GM12878 (cell line): ENCODE measurements at regions of chr16 and their contacts with region 1.

Region 1: DNA sequence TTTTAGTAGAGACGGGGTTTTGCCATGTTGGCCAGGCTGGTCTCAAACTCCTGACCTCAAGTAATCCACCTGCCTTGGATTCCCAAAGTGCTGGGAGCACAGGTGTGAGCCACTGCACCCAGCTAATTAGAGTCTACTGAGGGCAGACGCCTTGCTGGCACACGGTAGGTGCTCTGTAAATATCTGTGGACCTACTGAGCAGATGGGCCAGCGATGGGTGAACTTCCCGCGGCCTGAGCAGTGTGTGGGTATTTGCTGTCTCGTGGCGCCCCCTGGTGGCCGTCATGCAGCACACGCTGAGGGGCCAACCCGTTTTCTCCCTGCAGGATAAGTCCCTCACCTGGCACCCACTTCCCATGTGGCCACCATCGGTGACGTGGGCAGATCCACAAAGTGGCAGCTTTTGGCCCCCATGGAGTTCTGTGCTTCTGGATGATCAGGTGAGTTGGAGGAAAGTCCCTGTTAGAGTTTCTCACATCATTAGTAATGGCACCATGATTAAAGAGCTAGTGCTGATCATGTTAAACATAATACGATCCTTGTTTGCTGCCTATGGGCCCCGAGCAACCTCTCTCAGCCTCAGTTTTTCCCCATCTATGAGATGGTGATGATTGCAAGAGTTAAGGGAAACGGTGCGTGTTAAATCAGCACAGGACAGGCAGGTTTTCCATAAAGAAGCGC is 40.7 kb downstream of the ZDHHC7 start:
- DNase-seq: peak; percentile 27
- ATAC-seq: peak; percentile 99
- H3K4me3 ChIP-seq: no peak overlapping the region
- H3K27ac ChIP-seq: no peak overlapping the region
- H3K4me1 ChIP-seq: no peaks in the 10 kb centered on the region
- H3K27me3 ChIP-seq: no peaks in the 10 kb centered on the region
- CTCF ChIP-seq: peak; percentile 89 to 92 (median 90)
- EP300 ChIP-seq: no peak
- POLR2A ChIP-seq: no peak
- RAD21 ChIP-seq: peak; percentile 82

Region 2: GRCh38 chr16:84746882-84747281 is 223.7 kb before region 1 on chr16:
- CTCF ChIA-PET with region 1: interaction called, 157 read pairs
- POLR2A ChIA-PET with region 1: no interaction called
- RAD21 ChIA-PET with region 1: interaction called, 84 read pairs
- SMC1A ChIA-PET with region 1: interaction called, 142 read pairs
- in situ Hi-C with region 1: loop called (anchors 5 kb)
- intact Hi-C with region 1: no loop called
- DNase-seq: no peak
- ATAC-seq: no peak
- H3K4me3 ChIP-seq: no peak overlapping the region
- H3K27ac ChIP-seq: no peak overlapping the region
- H3K4me1 ChIP-seq: peaks cover 22% of the 10 kb centered on the region
- H3K27me3 ChIP-seq: no peaks in the 10 kb centered on the region
- CTCF ChIP-seq: 0 out of 6 replicates have a peak, but pooled peaks of 2 of the 3 experiments have one; percentile 11 to 22
- EP300 ChIP-seq: no peak
- POLR2A ChIP-seq: no peak
- RAD21 ChIP-seq: no peak

Region 3: GRCh38 chr16:84925092-84925772 is 45.4 kb before region 1 on chr16:
- CTCF ChIA-PET with region 1: interaction called, 60 read pairs
- POLR2A ChIA-PET with region 1: no interaction called
- RAD21 ChIA-PET with region 1: interaction called, 11 read pairs
- SMC1A ChIA-PET with region 1: interaction called, 8 read pairs
- in situ Hi-C with region 1: no loop called
- intact Hi-C with region 1: loop called (anchors 1 kb)
- DNase-seq: no peak
- ATAC-seq: peak; percentile 90
- H3K4me3 ChIP-seq: no peak overlapping the region
- H3K27ac ChIP-seq: no peak overlapping the region
- H3K4me1 ChIP-seq: no peaks in the 10 kb centered on the region
- H3K27me3 ChIP-seq: no peaks in the 10 kb centered on the region
- CTCF ChIP-seq: peak; percentile 73 to 84 (median 73)
- EP300 ChIP-seq: no peak
- POLR2A ChIP-seq: no peak
- RAD21 ChIP-seq: peak; percentile 71

Region 4: DNA sequence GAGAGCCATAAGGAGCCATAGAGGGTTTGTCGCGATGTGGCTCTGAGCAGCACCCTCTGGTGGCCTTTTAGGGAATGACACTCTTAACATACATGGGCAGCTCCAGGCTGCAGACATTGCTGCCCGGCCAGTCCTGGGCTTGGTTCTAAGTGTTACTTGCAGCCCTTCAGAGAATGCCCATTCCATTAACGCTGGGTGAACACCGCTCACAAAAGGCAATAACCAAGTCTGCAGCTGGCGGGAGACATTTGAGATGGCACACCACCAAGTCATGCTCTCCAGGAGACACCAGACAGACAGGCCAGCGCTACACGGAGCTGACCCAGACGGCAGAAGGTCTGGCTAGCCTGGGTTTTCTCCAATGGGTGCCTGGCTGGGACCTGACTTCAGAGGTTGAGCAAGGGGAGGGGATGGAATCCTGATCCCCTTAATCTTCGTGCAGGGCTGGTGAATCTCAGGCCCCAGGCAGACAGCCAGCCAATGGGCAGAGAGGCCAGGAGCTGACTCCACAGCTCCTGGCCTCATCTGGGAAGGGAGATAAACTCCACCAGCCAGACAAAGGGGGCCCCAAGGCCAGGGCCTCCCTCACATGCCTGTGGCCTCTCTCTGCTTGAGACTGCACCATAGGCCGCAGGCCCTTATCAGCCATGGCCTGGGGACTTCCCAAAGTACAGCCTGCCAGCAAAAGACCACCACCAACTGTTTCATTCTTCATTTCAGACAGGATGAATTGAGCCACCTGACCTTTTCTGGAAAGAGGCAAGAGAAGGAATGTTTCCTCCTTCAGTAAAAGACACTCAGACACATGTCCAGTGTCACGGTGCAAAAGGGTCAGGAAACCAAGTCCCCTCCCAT is 18.0 kb before region 1 on chr16:
- CTCF ChIA-PET with region 1: interaction called, 88 read pairs
- POLR2A ChIA-PET with region 1: no interaction called
- RAD21 ChIA-PET with region 1: interaction called, 6 read pairs
- SMC1A ChIA-PET with region 1: interaction called, 11 read pairs
- in situ Hi-C with region 1: no loop called
- intact Hi-C with region 1: loop called (anchors 1 kb)
- DNase-seq: peak; percentile 40
- ATAC-seq: peak; percentile 94
- H3K4me3 ChIP-seq: no peak overlapping the region
- H3K27ac ChIP-seq: no peak overlapping the region
- H3K4me1 ChIP-seq: peaks cover 4% of the 10 kb centered on the region; the same call in 1 of the 2 replicates
- H3K27me3 ChIP-seq: no peaks in the 10 kb centered on the region; a peak in 1 of 4 replicates
- CTCF ChIP-seq: peak; percentile 85
- EP300 ChIP-seq: no peak
- POLR2A ChIP-seq: no peak
- RAD21 ChIP-seq: peak; percentile 58

Region 5: DNA sequence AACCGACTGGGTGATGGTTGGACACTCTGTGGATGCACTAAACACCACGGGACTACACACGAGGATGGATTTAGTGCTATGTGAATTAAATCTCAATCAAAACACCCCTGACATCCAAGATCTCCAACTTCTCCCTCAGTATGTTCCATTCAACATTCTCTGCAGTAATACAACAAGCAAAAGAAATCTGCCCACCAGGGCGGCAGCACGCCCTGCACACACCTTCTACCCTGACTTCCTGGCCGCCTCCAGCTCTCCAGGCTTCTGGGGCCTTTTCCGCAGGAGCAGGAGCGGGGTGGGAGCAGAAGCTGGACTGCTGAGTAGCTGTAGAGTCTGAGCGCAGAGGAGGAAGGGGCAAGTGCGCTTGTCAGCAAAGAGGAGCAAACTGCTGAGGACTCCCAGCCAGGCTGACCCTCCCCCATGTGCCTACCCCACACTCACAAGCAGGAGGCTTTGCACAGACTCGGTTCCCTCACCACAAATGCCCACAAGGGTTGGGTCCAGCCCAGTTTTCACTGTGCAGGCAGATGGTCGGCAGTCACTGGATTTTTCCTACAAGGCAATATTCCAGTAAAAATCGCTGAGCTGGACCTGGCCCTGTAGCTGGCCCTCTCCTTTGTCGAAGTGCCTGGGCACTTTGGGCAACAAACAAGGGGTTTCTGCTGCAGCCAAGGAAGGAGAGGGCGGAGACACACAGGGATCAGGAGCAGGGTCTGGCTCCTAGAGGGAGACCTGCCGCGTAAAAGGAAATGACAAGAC is 17.9 kb after region 1 on chr16:
- CTCF ChIA-PET with region 1: interaction called, 14 read pairs
- POLR2A ChIA-PET with region 1: no interaction called
- RAD21 ChIA-PET with region 1: interaction called, 3 read pairs
- SMC1A ChIA-PET with region 1: interaction called, 4 read pairs
- in situ Hi-C with region 1: no loop called
- intact Hi-C with region 1: no loop called
- DNase-seq: no peak
- ATAC-seq: no peak
- H3K4me3 ChIP-seq: no peak overlapping the region
- H3K27ac ChIP-seq: no peak overlapping the region
- H3K4me1 ChIP-seq: no peaks in the 10 kb centered on the region
- H3K27me3 ChIP-seq: no peaks in the 10 kb centered on the region
- CTCF ChIP-seq: no peak
- EP300 ChIP-seq: no peak
- POLR2A ChIP-seq: no peak
- RAD21 ChIP-seq: no peak